ENCODE measurements at regions of chr21 and their contacts with region 1.

Region 1: GRCh38 chr21:15437883-15438282 is 291.9 kb upstream of the USP25 start:
- DNase-seq: peak; percentile 28
- H3K4me3 Mint-ChIP-seq: no peak overlapping the region
- H3K27ac Mint-ChIP-seq: peak overlapping the region; percentile 36
- H3K4me1 Mint-ChIP-seq: peaks cover 19% of the 10 kb centered on the region
- H3K27me3 Mint-ChIP-seq: no peaks in the 10 kb centered on the region

Region 2: GRCh38 chr21:14825514-14825974 is 612.3 kb before region 1 on chr21:
- CTCF ChIA-PET with region 1: no interaction called
- intact Hi-C with region 1: loop called (anchors 5 kb)
- DNase-seq: peak; percentile 25
- H3K4me3 Mint-ChIP-seq: no peak overlapping the region
- H3K27ac Mint-ChIP-seq: no peak overlapping the region
- H3K4me1 Mint-ChIP-seq: peaks cover 13% of the 10 kb centered on the region
- H3K27me3 Mint-ChIP-seq: peaks cover 2% of the 10 kb centered on the region

Region 3: DNA sequence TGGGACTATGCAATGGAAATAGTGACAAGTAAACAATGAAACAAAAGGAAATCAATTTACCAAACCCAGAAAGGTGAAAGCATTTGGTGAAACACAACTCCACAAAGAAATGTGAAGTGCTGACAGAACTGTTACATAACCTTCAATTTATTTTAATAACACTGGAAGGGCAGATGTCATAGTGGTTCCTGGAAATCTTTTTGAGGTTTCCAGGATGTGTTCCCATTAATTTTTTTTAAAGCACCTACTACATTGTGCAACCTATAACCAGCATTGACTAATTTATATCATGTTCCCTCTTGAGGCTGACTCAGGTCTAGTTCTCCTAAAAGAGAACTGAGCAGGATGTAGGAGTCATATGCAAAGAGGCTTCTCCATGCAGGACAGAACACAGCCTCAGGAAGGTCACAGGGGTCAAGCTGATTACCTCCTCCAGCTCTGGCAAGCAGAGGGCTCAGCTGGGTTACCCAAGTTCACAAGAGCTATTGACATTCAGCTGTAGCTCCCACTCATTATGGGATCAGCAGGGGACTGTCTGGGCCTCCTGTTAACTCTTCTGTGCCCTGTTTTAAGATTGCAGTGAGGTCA is 216.0 kb before region 1 on chr21:
- CTCF ChIA-PET with region 1: no interaction called
- intact Hi-C with region 1: loop called (anchors 1 kb)
- DNase-seq: peak; percentile 48
- H3K4me3 Mint-ChIP-seq: no peak overlapping the region
- H3K27ac Mint-ChIP-seq: peak overlapping the region; percentile 30
- H3K4me1 Mint-ChIP-seq: peaks cover 29% of the 10 kb centered on the region
- H3K27me3 Mint-ChIP-seq: peaks cover 4% of the 10 kb centered on the region

Region 4: DNA sequence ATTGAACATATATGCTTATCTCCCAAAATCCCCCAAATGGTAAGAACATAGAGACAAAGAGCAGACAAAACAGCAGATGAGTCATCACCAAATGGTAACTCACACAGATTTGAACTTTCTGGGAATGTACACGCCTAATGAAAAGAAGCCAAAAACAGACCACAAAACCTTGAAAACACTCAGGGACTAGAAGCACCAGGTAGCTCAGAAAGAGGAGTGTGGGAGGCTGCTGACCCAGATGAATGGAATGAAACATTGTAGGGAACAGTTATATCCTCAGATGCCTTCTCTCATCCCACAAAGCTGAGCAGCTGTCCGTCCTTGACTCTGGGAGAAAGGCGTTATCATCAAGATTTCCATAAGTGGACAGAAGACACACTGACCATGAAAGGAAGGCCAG is 15.1 kb before region 1 on chr21:
- CTCF ChIA-PET with region 1: interaction called, 8 read pairs
- intact Hi-C with region 1: loop called (anchors 1 kb)
- DNase-seq: peak; percentile 12
- H3K4me3 Mint-ChIP-seq: no peak overlapping the region
- H3K27ac Mint-ChIP-seq: peak overlapping the region; percentile 14
- H3K4me1 Mint-ChIP-seq: peaks cover 39% of the 10 kb centered on the region
- H3K27me3 Mint-ChIP-seq: peaks cover 5% of the 10 kb centered on the region

Region 5: GRCh38 chr21:15514073-15514946 is 76.4 kb after region 1 on chr21:
- CTCF ChIA-PET with region 1: no interaction called
- intact Hi-C with region 1: loop called (anchors 1 kb)
- DNase-seq: peak; percentile 72
- H3K4me3 Mint-ChIP-seq: peak overlapping the region; percentile 55
- H3K27ac Mint-ChIP-seq: peak overlapping the region; percentile 85
- H3K4me1 Mint-ChIP-seq: peaks cover 28% of the 10 kb centered on the region
- H3K27me3 Mint-ChIP-seq: no peaks in the 10 kb centered on the region